Prostate gland (tissue), 2 donors: ENCODE measurements at regions of chr9 and their contacts with region 1.

Region 1: DNA sequence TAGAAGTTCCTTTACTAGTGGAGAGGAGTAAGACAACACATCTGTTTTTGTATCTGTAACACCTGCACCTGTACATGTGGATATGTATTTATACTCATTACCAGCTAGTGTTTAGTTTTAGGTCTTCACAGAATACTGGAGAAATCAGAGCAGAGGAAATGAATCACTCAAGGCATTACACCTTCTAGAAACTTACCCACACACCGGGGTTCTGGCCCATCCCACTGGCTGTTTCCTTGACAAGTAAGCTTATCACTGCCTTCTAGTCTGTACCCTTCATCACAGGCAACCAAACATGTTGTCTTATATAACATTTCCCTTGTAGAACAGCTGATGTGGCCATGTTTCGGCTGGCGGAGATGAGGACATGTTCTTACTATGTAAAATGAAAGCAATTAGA is 76.7 kb downstream of the SVEP1 start:
- DNase-seq: no peak
- H3K4me3 ChIP-seq: no peak overlapping the region
- H3K27ac ChIP-seq: no peak overlapping the region
- H3K4me1 ChIP-seq: no peaks in the 10 kb centered on the region
- H3K27me3 ChIP-seq: no peaks in the 10 kb centered on the region
- CTCF ChIP-seq: no peak
- POLR2A ChIP-seq: no peak

Region 2: DNA sequence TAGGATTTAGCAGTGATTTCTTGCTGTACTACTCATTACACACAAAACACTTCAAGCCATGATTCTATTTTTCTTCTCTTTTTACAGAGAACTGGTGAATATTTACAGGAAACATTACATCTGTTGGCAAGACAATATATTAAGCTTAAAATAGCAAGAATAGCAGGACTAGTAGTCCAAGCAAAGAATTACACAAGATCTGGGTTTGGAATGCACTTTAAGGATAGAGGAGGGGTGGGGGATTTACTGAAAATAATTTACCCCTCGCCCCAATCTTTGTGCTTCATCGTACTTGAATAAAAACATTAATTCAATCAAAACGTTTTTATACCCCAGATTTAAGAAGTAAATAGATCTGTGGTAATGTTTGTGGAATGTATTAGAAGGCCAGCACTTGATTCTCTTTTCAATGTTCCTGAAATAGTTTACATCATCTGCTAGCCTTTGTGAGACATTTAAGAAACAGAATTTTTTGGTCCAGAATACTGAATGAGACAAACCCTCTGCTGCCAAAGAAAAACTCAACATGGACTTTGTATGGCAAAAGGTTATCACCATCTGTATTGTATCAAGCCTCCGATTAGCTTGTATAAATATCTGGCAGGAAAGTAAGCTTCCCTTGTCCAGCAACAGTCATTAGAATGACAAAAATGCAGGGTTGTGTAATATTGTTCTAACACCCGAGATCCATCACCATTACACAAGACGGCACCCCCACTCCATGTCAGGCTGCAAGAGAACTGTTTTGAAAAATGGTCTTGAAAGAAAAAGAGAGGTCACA is 52.9 kb after region 1 on chr9:
- intact Hi-C with region 1: no loop called
- DNase-seq: no peak
- H3K4me3 ChIP-seq: no peak overlapping the region
- H3K27ac ChIP-seq: no peak overlapping the region
- H3K4me1 ChIP-seq: no peaks in the 10 kb centered on the region
- H3K27me3 ChIP-seq: no peaks in the 10 kb centered on the region
- CTCF ChIP-seq: no peak
- POLR2A ChIP-seq: no peak

Region 3: GRCh38 chr9:110579034-110579861 is 76.4 kb after region 1 on chr9 and contains the start of gene SVEP1:
- intact Hi-C with region 1: loop called (anchors 10 kb)
- DNase-seq: no peak
- H3K4me3 ChIP-seq: peak within 1 kb of the TSS; percentile 28 to 35
- H3K27ac ChIP-seq: peak within 1 kb of the TSS; percentile 7 to 21
- H3K4me1 ChIP-seq: no peaks in the 10 kb centered on the region
- H3K27me3 ChIP-seq: no peaks in the 10 kb centered on the region
- CTCF ChIP-seq: no peak
- POLR2A ChIP-seq: no peak
- total RNA-seq, gene SVEP1: 2.7 to 5.8 TPM